ENCODE measurements at regions of chr2 and their contacts with region 1.

Region 1: DNA sequence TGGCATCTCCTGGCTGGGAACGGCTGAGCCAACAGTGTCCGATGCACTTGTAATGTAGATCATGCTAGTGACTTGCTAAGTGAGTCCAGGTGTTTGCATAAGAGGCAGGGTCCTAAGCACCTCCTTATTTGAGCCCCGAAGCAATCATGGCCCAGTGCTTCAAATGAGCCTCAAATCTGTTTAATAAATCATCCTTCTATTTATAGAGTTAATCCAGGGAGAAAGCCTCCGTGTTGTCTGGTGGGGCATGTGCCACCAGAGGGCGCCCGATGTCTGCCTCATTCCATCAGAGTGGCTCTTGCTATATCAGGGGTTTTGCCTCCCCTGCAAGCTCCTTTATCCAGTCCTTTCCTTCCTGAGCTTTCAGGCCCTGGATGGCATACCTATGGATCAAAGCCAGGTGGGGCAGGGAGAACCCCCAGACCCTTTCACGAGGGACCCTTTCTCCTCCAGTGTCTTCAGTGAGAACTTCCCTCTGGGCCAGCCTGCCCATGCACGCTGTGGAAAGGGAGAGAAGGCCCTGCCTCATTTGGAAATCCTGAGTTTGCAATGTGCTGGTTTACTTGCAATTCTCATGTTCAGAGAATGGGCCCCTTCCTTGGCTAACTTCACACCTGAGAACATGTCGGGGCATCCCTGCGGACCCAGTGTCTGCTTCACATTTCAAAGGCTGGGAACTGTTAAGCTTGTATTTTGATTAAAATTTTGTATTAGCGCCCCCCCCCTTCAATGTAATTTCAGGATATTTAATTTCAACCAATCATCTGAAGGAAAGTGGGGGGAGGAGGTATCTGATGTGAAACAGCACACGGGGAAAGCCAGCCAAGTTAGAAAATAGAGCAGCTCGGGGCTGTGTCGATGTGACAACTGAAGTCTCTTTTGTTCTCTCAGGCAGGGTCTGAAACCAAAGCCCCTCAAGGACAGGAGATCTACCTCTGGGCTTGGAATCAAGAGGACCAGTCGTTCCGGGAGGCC is 39.7 kb downstream of the RDH14 start:
- DNase-seq: peak; percentile 71 to 91 (median 86)
- ATAC-seq: peak; percentile 83
- H3K4me3 ChIP-seq: no peak overlapping the region
- H3K4me1 ChIP-seq: no peaks in the 10 kb centered on the region
- CTCF ChIP-seq: peak; percentile 70

Region 2: GRCh38 chr2:18473241-18474181 is 47.2 kb before region 1 on chr2:
- intact Hi-C with region 1: no loop called
- DNase-seq: no peak
- ATAC-seq: peak; percentile 46
- H3K4me3 ChIP-seq: no peak overlapping the region
- H3K4me1 ChIP-seq: no peaks in the 10 kb centered on the region
- CTCF ChIP-seq: no peak

Region 3: GRCh38 chr2:18749912-18750526 is 229.3 kb after region 1 on chr2:
- intact Hi-C with region 1: loop called in 1 of 2 experiments (anchors 10 kb)
- DNase-seq: peak in 1 of 3 donors; percentile 84
- ATAC-seq: peak; percentile 55
- H3K4me3 ChIP-seq: no peak overlapping the region
- H3K4me1 ChIP-seq: peaks cover 8% of the 10 kb centered on the region
- CTCF ChIP-seq: peak; percentile 30

Region 4: DNA sequence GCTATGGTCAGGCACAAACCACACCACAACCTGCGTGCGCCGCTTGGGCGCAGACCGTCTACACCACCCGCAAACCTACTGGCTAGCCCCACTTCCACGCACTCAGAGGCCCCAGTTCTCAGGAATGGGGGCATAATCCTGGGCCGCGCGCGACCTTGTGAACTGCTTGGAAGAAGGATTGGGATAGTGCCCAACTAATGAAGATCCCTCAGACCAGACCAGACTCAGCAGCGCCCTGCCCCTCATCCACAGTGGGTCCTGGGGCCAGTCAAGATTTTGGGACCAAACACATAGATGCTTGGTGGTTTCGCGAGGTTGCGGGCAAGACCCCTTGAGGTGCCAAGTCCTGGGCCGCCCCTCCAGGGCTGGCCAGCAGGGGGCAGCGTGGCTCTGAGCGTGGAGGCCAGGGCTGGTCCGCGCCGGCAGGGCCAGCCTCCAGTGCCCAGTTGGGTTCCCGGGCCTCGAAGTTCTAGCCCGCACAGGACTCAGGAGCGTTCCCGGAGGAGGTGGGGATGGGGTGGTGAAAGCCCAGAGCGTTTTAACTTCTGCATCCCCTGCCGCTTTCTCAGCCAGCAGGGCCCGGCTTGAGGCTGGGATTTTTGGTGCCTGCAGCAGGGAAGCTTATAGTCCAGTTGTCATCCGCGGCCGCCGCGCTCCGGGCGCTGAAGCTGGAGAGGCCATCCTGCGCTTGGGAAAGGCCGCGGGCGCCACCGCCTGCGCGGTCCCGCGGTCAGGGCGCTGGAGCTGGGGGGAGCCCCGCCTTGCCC is 829.4 kb after region 1 on chr2:
- intact Hi-C with region 1: loop called in 1 of 2 experiments (anchors 10 kb)
- DNase-seq: peak; percentile 65 to 81 (median 78)
- ATAC-seq: peak; percentile 57
- H3K4me3 ChIP-seq: no peak overlapping the region
- H3K4me1 ChIP-seq: peaks cover 16% of the 10 kb centered on the region
- CTCF ChIP-seq: peak; percentile 76